ENCODE measurements at regions of chr9 and their contacts with region 1.

Region 1: GRCh38 chr9:6681147-6681956 is 35.8 kb upstream of the GLDC start:
- DNase-seq: peak; percentile 96
- ATAC-seq: peak; percentile 94
- H3K4me3 ChIP-seq: peak overlapping the region; percentile 74 to 86 (median 77)
- H3K27ac ChIP-seq: peak overlapping the region; percentile 98
- H3K4me1 ChIP-seq: peaks cover 69% of the 10 kb centered on the region
- H3K27me3 ChIP-seq: no peaks in the 10 kb centered on the region
- CTCF ChIP-seq: peak; percentile 45
- EP300 ChIP-seq: peak; percentile 9 to 54; a peak in 1 of 4 replicates
- POLR2A ChIP-seq: peak; percentile 83 to 97
- RAD21 ChIP-seq: peak; percentile 33; the same call in 1 of the 2 replicates

Region 2: DNA sequence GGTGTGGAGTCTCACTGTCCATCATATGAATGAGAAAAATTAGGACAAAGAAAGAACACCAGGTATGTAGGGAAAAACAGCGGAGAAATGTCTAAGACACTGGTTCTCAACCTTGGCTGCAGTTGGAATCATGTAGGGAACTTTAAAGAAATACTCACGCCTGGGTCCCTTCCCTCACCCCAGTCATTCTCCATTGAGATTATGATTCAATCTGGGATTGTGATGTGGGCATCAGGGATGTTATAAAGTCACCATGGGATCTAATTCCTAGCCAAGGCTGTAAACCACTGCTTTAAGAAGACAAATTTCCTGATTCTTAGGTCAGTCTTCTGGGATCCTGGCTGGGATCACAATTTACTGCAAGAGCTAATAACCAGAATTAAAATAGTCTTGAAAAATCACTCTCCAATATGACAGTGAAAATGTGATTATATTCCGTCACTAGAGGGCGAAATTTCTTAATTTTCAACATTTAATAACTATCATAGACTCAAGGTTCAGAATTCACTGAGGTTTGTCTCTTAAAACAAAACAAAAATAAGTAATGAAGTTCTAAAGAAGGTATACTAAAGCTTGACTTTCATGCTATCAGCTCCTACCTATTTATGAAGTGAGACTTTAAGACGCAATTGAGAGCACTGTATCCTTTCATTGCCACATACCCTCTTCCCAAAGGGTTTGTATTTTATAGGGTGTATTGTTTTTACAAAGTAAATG is 96.3 kb before region 1 on chr9:
- CTCF ChIA-PET with region 1: interaction called, 5 read pairs
- POLR2A ChIA-PET with region 1: interaction called, 5 read pairs
- in situ Hi-C with region 1: loop called (anchors 5 kb)
- intact Hi-C with region 1: loop called (anchors 1 kb)
- DNase-seq: peak; percentile 19
- ATAC-seq: peak; percentile 56; the same call in 2 of the 3 replicates
- H3K4me3 ChIP-seq: no peak overlapping the region
- H3K27ac ChIP-seq: no peak overlapping the region
- H3K4me1 ChIP-seq: peaks cover 7% of the 10 kb centered on the region
- H3K27me3 ChIP-seq: no peaks in the 10 kb centered on the region
- CTCF ChIP-seq: peak; percentile 44
- EP300 ChIP-seq: no peak
- POLR2A ChIP-seq: no peak
- RAD21 ChIP-seq: no peak

Region 3: DNA sequence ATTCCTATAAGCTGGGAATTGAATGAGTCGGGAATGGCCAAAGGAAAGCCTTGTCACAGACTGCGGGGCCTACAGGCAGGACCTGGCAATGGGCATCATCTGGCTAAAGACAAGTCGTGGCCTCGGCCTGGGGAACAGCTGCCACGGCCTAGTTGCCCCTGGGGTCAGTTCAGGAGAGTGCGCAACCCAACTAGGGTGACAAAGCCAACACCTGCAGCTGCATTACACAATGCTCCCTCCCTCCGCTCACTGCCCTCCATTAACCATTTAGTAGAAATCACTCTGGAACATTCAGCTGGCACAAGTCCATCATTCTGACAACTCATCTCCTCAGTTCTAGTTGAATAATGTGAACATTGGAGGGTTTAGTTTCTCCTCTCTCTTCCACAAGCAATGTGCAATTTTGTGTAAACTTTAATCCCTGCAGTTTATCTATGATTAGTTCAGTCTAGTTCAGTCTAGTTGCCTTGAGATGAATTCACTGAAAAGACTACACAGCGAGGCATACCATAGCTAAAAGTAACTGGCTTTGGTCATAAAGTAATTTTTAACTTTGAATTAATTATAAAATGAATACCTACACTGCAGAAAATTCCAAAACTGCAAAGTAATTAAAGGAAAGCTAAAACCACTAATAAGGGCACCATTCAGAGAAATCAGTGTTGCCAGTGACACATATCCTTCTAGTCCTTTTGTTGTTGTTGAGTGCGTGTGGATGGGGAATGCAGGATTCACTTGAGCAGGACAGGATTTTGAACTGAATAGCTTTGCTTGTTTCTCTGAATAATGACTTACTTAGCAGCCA is 40.9 kb before region 1 on chr9:
- CTCF ChIA-PET with region 1: no interaction called
- POLR2A ChIA-PET with region 1: interaction called, 13 read pairs
- in situ Hi-C with region 1: no loop called
- intact Hi-C with region 1: loop called (anchors 1 kb)
- DNase-seq: peak; percentile 16
- ATAC-seq: peak; percentile 21
- H3K4me3 ChIP-seq: no peak overlapping the region
- H3K27ac ChIP-seq: no peak overlapping the region
- H3K4me1 ChIP-seq: peaks cover 60% of the 10 kb centered on the region
- H3K27me3 ChIP-seq: no peaks in the 10 kb centered on the region; a peak in 1 of 5 replicates
- CTCF ChIP-seq: no peak
- EP300 ChIP-seq: no peak; a peak in 1 of 4 replicates
- POLR2A ChIP-seq: no peak
- RAD21 ChIP-seq: no peak

Region 4: GRCh38 chr9:6667633-6668280 is 13.6 kb before region 1 on chr9:
- CTCF ChIA-PET with region 1: no interaction called
- POLR2A ChIA-PET with region 1: interaction called, 40 read pairs
- in situ Hi-C with region 1: no loop called
- intact Hi-C with region 1: loop called (anchors 2 kb)
- DNase-seq: no peak
- ATAC-seq: no peak
- H3K4me3 ChIP-seq: no peak overlapping the region
- H3K27ac ChIP-seq: no peak overlapping the region
- H3K4me1 ChIP-seq: peaks cover 70% of the 10 kb centered on the region
- H3K27me3 ChIP-seq: no peaks in the 10 kb centered on the region
- CTCF ChIP-seq: peak; percentile 69
- EP300 ChIP-seq: no peak
- POLR2A ChIP-seq: no peak
- RAD21 ChIP-seq: peak; percentile 47; the same call in 1 of the 2 replicates

Region 5: DNA sequence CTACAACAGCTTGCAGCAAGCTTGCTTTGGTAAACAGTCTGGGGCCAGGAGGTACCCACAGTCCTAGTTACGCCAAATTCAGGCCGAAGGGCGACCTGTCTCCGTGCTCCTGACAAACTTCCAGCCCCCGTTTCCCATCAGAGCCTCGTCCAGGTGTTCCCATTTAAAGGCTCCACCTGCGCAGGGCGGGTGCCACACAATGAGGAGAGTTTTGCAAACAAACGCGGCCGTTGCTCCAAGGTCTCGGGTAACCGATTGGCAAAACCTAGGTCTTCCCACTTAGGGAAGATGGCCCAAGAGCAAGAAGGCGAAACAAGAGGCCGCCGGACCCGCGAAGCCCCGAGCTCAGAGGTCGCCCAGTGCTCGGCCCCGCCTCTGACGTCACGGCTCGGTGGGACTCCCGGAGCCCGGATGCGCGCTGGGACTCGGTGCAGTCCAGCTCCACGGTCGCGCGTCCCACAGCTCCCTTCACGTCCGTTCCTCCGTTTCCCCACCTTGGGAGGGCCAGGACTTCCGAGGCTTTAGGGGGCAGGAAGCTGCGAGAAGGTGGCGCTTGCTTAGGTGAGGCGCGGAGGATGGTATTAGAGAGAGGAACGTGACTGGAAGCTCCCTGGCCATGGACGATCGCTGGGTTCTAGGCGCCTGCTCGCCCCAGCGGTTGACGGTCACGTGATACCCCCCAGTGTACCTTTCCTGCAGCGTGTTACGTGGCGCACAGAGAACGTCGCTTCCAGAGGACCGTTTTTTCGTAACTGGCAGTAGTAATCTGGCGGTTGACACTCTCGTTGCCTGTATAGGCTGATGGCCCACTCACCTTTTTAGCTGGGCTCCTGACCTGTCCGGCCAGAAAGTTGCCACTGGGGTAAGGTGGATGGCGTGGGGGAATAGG is 34.6 kb after region 1 on chr9:
- CTCF ChIA-PET with region 1: no interaction called
- POLR2A ChIA-PET with region 1: interaction called, 41 read pairs
- in situ Hi-C with region 1: no loop called
- intact Hi-C with region 1: loop called (anchors 5 kb)
- DNase-seq: peak; percentile 79
- ATAC-seq: peak; percentile 89
- H3K4me3 ChIP-seq: peak overlapping the region; percentile 57 to 72 (median 65)
- H3K27ac ChIP-seq: peak overlapping the region; percentile 93
- H3K4me1 ChIP-seq: peaks cover 34% of the 10 kb centered on the region
- H3K27me3 ChIP-seq: no peaks in the 10 kb centered on the region
- CTCF ChIP-seq: 0 out of 2 replicates have a peak, but pooled peaks have one; percentile 16
- EP300 ChIP-seq: no peak
- POLR2A ChIP-seq: peak; percentile 85 to 93
- RAD21 ChIP-seq: no peak

Region 6: DNA sequence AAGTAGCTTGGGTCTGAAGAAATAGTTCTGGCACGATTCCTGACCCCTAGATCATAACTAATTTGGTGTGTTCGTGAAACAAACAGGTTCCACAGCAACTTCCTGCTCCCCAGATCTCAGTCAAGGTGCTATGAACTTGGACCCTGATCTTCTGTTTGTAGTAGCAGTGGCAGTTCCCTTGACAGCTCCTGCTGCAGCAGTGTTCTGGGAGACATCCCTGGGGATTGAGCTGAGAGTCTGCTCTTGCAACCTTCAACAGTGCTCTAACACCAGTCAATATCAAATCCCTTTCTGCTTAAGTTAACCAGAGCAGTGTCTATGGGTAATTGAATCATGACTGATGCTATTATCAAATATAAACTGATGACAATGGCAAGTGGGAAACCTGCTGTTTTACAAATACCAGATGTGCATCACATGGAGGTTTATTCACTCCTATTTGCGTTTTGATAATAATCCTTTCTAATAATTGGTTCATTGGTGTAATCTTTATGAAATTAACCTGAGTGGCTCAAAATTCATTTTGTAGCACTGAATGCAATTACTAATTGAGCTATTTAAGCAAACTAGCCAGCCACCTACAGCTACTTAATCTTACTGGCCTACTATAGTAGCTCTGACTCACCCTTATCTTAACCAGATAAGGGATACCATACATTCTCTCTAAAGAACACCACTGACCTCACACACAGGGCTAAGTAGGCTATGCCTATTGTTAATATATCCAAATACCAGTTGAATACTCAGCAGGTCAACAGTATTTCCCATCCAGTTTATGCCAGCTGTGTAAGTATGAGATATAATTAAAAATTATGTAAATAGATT is 98.3 kb after region 1 on chr9:
- CTCF ChIA-PET with region 1: no interaction called
- POLR2A ChIA-PET with region 1: interaction called, 6 read pairs
- in situ Hi-C with region 1: no loop called
- intact Hi-C with region 1: loop called (anchors 1 kb)
- DNase-seq: peak; percentile 81
- ATAC-seq: peak; percentile 77
- H3K4me3 ChIP-seq: peak overlapping the region in 1 of 3 experiments; percentile 9; a peak in 1 of 6 replicates
- H3K27ac ChIP-seq: peak overlapping the region; percentile 83
- H3K4me1 ChIP-seq: peaks cover 81% of the 10 kb centered on the region
- H3K27me3 ChIP-seq: no peaks in the 10 kb centered on the region
- CTCF ChIP-seq: no peak
- EP300 ChIP-seq: peak in 1 of 2 experiments; percentile 41; a peak in 1 of 4 replicates
- POLR2A ChIP-seq: 0 out of 4 replicates have a peak, but pooled peaks of 1 of the 2 experiments have one; percentile 18
- RAD21 ChIP-seq: no peak

Measured in HepG2 (cell line).